Activated T-helper 2 cell treated with anti-CD3 and anti-CD28 coated beads, Interferon-gamma antibody, Interleukin-2, Interleukin-4, amounts not matched to agents 10 μg/mL and 5 μg/mL and 100 μg/mL, durations not matched to agents 14 hours and 24 hours and 36 hours (primary cell): ENCODE measurements at regions of chr19 and their contacts with region 1.

Region 1: GRCh38 chr19:14383661-14384555 is 2.7 kb downstream of the ADGRE5 start:
- DNase-seq: peak; percentile 50
- H3K4me3 Mint-ChIP-seq: peak overlapping the region; percentile 97
- H3K27ac Mint-ChIP-seq: peak overlapping the region; percentile 98
- H3K4me1 Mint-ChIP-seq: peaks cover 29% of the 10 kb centered on the region
- H3K27me3 Mint-ChIP-seq: no peaks in the 10 kb centered on the region

Region 2: GRCh38 chr19:14419106-14419813 is 35.4 kb after region 1 on chr19 and contains the start of gene DDX39A:
- intact Hi-C with region 1: loop called (anchors 2 kb)
- DNase-seq: peak; percentile 99
- H3K4me3 Mint-ChIP-seq: peak within 1 kb of the TSS; percentile 93
- H3K27ac Mint-ChIP-seq: peak within 1 kb of the TSS; percentile 97
- H3K4me1 Mint-ChIP-seq: peaks cover 20% of the 10 kb centered on the region
- H3K27me3 Mint-ChIP-seq: no peaks in the 10 kb centered on the region
- total RNA-seq, gene DDX39A: 268 TPM in 2 replicates